Posterior vena cava (tissue), 2 donors: ENCODE measurements at regions of chr2 and their contacts with region 1.

Region 1: GRCh38 chr2:52308156-52308555 is 1276.2 kb upstream of the NRXN1 start:
- DNase-seq: no peak

Region 2: GRCh38 chr2:51387235-51387634 is 920.9 kb before region 1 on chr2:
- intact Hi-C with region 1: loop called in 1 of 2 experiments (anchors 5 kb)
- DNase-seq: no peak

Region 3: DNA sequence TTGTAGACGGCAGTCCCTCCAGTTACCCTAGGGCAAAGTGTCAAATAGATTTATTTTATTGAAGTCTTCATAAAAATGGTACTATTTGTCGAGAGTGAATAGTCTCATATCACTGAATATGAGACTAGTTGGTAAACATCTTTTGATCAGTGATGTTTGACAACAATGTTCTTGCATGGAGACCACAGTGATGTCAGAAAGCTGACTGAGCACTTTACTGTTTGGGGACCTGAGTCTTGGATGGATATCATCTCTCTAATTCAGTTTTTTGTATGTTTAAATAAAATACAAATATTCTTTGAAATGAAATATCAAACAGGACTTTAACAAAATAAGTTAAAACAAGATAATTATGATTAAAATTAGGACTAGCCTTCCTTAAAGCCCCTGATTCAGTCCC is 39.1 kb after region 1 on chr2:
- intact Hi-C with region 1: no loop called
- DNase-seq: no peak